A549 (cell line): ENCODE measurements at regions of chr15 and their contacts with region 1.

Region 1: GRCh38 chr15:66946578-66947164 is 118.7 kb upstream of the SMAD3 start:
- DNase-seq: peak; percentile 83 to 92
- ATAC-seq: peak; percentile 72 to 77
- H3K4me3 ChIP-seq: no peak overlapping the region
- H3K27ac ChIP-seq: peak overlapping the region; percentile 60 to 82
- H3K4me1 ChIP-seq: peaks cover 39% of the 10 kb centered on the region
- CTCF ChIP-seq: peak; percentile 98
- EP300 ChIP-seq: no peak
- POLR2A ChIP-seq: no peak
- RAD21 ChIP-seq: peak; percentile 99

Region 2: GRCh38 chr15:66907826-66908743 is 38.6 kb before region 1 on chr15:
- CTCF ChIA-PET with region 1: interaction called, 18 read pairs
- POLR2A ChIA-PET with region 1: no interaction called
- DNase-seq: no peak
- ATAC-seq: peak; percentile 7 to 15; a peak in 2 of 6 replicates
- H3K4me3 ChIP-seq: no peak overlapping the region
- H3K27ac ChIP-seq: peak overlapping the region in 1 of 2 experiments; percentile 38; a peak in 2 of 6 replicates
- H3K4me1 ChIP-seq: peaks cover 12% of the 10 kb centered on the region; the same call in 2 of the 3 replicates
- CTCF ChIP-seq: no peak
- EP300 ChIP-seq: no peak
- POLR2A ChIP-seq: no peak
- RAD21 ChIP-seq: no peak

Region 3: DNA sequence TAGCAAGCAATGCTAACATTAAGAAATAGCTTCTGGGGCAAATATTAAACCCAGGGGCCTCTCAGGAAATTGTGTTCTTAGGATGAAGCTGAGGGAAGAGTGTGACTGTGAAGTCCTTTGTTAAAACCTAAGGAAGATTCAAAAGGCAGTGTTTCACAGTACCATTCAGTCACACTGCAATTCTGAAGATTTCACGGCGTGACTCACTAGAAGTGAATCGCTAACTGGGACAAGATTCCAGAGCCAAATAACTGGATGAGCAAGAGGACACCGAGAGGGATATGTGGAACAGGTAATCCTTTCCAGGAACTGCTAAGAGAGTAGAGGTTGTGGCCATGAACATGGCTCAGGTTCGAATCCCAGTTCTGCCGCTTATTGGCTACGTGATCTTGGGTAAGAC is 56.9 kb after region 1 on chr15:
- CTCF ChIA-PET with region 1: interaction called, 17 read pairs
- POLR2A ChIA-PET with region 1: no interaction called
- DNase-seq: peak; percentile 36 to 39
- ATAC-seq: peak; percentile 72 to 76; a peak in 4 of 6 replicates
- H3K4me3 ChIP-seq: no peak overlapping the region
- H3K27ac ChIP-seq: peak overlapping the region; percentile 12 to 58; a peak in 5 of 6 replicates
- H3K4me1 ChIP-seq: peaks cover 13% of the 10 kb centered on the region
- CTCF ChIP-seq: no peak
- EP300 ChIP-seq: no peak
- POLR2A ChIP-seq: no peak
- RAD21 ChIP-seq: no peak

Region 4: DNA sequence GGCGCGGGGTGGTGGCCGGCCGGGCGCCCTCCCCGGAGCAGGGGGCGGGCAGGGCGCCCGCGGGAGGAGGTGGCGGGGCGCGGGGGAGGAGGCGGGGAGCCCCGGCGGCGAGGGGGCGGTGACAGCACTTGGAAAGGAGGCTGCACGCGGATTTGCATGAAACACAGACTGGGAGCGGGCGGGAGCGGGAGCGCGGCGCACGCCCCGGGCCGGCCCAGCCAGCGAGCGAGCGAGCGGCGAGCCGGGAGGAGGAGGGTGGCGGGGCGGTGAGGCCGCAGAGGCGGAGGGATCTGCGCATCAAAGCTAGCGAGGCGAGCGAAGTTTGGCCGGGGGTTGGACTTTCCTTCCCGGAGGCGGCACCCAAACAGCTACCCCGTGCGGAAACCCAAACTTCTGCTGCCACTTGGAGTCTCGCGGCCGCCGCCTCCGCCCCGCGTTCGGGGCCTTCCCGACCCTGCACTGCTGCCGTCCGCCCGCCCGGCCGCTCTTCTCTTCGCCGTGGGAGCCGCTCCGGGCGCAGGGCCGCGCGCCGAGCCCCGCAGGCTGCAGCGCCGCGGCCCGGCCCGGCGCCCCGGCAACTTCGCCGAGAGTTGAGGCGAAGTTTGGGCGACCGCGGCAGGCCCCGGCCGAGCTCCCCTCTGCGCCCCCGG is 118.9 kb after region 1 on chr15 and contains the start of gene SMAD3:
- CTCF ChIA-PET with region 1: interaction called, 66 read pairs
- POLR2A ChIA-PET with region 1: interaction called, 6 read pairs
- DNase-seq: peak; percentile 93 to 98
- ATAC-seq: peak; percentile 80 to 81
- H3K4me3 ChIP-seq: peak within 1 kb of the TSS; percentile 95
- H3K27ac ChIP-seq: peak within 1 kb of the TSS; percentile 89 to 96
- H3K4me1 ChIP-seq: peaks cover 52% of the 10 kb centered on the region
- CTCF ChIP-seq: peak; percentile 31; the same call in 2 of the 3 replicates
- EP300 ChIP-seq: no peak; a peak in 1 of 5 replicates
- POLR2A ChIP-seq: peak; percentile 75
- RAD21 ChIP-seq: peak; percentile 27 to 58; a peak in 2 of 5 replicates
- polyA plus RNA-seq, gene SMAD3: 77.2 and 101 TPM in 2 replicates

Region 5: DNA sequence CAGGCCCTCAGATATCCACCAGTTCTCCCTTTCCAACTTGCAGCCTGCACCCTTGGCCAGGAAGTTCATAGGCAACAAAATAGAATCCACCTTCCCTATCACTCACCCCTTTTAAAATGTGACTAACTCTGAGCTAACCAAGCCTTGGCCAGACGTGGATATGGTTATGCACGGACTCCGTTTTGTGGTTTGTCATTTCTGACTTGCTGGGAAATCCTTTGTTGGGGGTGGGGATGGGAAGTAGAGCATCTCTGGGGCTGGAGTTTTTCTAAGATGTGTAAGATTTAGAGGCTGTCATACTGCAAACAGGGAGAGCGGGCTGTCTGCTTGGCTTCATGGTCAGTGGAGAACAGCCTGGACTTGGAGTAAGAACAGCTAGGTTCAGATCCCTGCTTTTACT is 181.3 kb after region 1 on chr15:
- CTCF ChIA-PET with region 1: interaction called, 11 read pairs
- POLR2A ChIA-PET with region 1: interaction called, 9 read pairs
- DNase-seq: peak; percentile 82 to 91
- ATAC-seq: peak; percentile 19 to 41
- H3K4me3 ChIP-seq: no peak overlapping the region
- H3K27ac ChIP-seq: peak overlapping the region; percentile 86 to 92
- H3K4me1 ChIP-seq: peaks cover 97% of the 10 kb centered on the region
- CTCF ChIP-seq: no peak
- EP300 ChIP-seq: peak; percentile 41 to 61; a peak in 2 of 5 replicates
- POLR2A ChIP-seq: no peak
- RAD21 ChIP-seq: peak; percentile 29 to 42; a peak in 3 of 5 replicates

Region 6: DNA sequence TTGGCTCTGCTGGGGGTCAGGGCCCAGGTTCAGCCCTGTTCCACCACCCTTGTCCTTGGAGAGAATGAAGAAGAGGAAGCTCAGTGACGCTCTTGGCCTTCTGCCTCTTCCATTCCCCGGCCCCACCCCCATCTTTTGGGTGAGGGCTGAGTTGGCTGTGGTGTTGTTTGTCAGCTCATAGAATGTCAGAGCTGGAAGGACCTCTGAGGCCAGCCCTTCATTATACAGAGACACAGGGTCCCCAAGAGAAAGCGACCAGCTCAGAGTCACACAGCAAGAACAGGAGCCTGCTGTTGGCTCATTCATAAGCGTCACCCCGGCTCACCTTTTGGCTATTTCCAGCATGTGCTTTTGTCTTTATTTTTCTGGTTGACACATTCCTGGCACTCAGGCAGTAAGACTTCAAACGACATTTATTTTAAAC is 239.6 kb after region 1 on chr15:
- CTCF ChIA-PET with region 1: interaction called, 20 read pairs
- POLR2A ChIA-PET with region 1: no interaction called
- DNase-seq: peak in 1 of 2 experiments; percentile 12
- ATAC-seq: no peak; a peak in 1 of 6 replicates
- H3K4me3 ChIP-seq: no peak overlapping the region
- H3K27ac ChIP-seq: peak overlapping the region in 1 of 2 experiments; percentile 15; a peak in 3 of 6 replicates
- H3K4me1 ChIP-seq: peaks cover 53% of the 10 kb centered on the region
- CTCF ChIP-seq: no peak
- EP300 ChIP-seq: no peak
- POLR2A ChIP-seq: no peak
- RAD21 ChIP-seq: no peak

Region 7: DNA sequence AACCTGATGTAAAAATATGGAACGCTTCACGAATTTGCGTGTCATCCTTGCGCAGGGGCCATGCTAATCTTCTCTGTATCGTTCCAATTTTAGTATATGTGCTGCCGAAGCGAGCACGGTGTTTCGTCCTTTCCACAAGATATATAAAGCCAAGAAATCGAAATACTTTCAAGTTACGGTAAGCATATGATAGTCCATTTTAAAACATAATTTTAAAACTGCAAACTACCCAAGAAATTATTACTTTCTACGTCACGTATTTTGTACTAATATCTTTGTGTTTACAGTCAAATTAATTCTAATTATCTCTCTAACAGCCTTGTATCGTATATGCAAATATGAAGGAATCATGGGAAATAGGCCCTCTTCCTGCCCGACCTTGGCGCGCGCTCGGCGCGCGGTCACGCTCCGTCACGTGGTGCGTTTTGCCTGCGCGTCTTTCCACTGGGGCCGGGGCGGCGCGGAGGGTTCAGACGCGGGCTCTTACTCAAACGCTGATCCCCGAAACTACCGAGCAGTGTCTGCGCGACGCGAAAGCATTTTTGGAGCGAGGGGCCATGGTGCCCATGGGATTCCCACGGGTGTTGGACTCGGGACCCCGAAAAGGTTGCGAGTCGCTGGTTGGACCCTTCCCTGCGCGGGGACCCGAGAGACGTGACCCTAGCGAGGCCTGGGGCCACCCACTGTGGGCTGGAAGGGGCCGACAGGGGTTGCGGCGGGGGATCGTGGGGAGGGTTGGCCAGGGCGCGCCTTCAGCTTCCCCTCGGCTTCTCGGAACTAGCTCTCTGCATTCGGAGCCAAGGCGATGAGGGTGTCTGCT is 893.5 kb after region 1 on chr15 and contains the start of gene RNU6-1:
- CTCF ChIA-PET with region 1: interaction called, 11 read pairs
- POLR2A ChIA-PET with region 1: no interaction called
- DNase-seq: peak; percentile 95 to 98
- ATAC-seq: peak; percentile 62 to 84
- H3K4me3 ChIP-seq: peak within 1 kb of the TSS; percentile 69
- H3K27ac ChIP-seq: peak within 1 kb of the TSS; percentile 87 to 92
- H3K4me1 ChIP-seq: peaks cover 13% of the 10 kb centered on the region
- CTCF ChIP-seq: no peak; the same call in 2 of the 3 replicates
- EP300 ChIP-seq: no peak
- POLR2A ChIP-seq: peak; percentile 83
- RAD21 ChIP-seq: peak in 1 of 2 experiments; percentile 1; a peak in 1 of 5 replicates
- polyA plus RNA-seq, gene RNU6-1: not detected in 2 replicates